HCT116 (cell line): ENCODE measurements at regions of chr7 and their contacts with region 1.

Region 1: DNA sequence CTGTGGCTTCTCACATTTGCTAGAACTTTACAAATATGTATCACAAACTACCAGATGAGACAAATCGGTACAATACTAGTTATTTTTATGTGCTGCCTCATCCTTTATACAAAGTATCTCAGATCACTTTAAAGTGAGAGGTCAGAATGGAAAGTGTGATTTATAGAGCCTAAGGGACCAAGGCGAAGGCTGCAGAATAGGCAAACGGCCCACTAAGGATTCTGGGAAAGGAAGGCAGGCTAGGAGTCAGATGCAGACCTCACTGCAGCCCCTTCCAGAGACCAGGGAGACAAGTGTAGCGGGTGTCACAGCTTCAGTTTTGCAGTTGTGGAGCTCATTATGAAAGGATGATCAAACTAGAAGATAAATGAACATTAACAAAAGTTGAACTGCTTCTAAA is 190.6 kb downstream of the HIBADH start:
- DNase-seq: no peak
- ATAC-seq: no peak
- H3K4me3 ChIP-seq: no peak overlapping the region
- H3K27ac ChIP-seq: no peak overlapping the region
- H3K4me1 ChIP-seq: no peaks in the 10 kb centered on the region
- H3K27me3 ChIP-seq: no peaks in the 10 kb centered on the region
- CTCF ChIP-seq: no peak
- POLR2A ChIP-seq: no peak
- RAD21 ChIP-seq: no peak

Region 2: GRCh38 chr7:27277619-27278018 is 194.4 kb before region 1 on chr7:
- CTCF ChIA-PET with region 1: no interaction called
- POLR2A ChIA-PET with region 1: no interaction called
- RAD21 ChIA-PET with region 1: no interaction called
- intact Hi-C with region 1: no loop called
- DNase-seq: peak; percentile 29
- ATAC-seq: peak; percentile 53
- H3K4me3 ChIP-seq: no peak overlapping the region
- H3K27ac ChIP-seq: no peak overlapping the region
- H3K4me1 ChIP-seq: peaks cover 2 to 11% of the 10 kb centered on the region in 2 experiments; a peak in 3 of 4 replicates
- H3K27me3 ChIP-seq: no peaks in the 10 kb centered on the region
- CTCF ChIP-seq: no peak
- POLR2A ChIP-seq: no peak
- RAD21 ChIP-seq: no peak

Region 3: GRCh38 chr7:27419581-27420177 is 52.4 kb before region 1 on chr7:
- CTCF ChIA-PET with region 1: no interaction called
- POLR2A ChIA-PET with region 1: no interaction called
- RAD21 ChIA-PET with region 1: no interaction called
- intact Hi-C with region 1: loop called (anchors 2 kb)
- DNase-seq: no peak
- ATAC-seq: no peak
- H3K4me3 ChIP-seq: no peak overlapping the region
- H3K27ac ChIP-seq: no peak overlapping the region
- H3K4me1 ChIP-seq: peaks cover 5 to 9% of the 10 kb centered on the region in 2 experiments
- H3K27me3 ChIP-seq: no peaks in the 10 kb centered on the region
- CTCF ChIP-seq: no peak
- POLR2A ChIP-seq: no peak
- RAD21 ChIP-seq: no peak